CD8-positive, alpha-beta memory T cell (primary cell): ENCODE measurements at regions of chr1 and their contacts with region 1.

Region 1: DNA sequence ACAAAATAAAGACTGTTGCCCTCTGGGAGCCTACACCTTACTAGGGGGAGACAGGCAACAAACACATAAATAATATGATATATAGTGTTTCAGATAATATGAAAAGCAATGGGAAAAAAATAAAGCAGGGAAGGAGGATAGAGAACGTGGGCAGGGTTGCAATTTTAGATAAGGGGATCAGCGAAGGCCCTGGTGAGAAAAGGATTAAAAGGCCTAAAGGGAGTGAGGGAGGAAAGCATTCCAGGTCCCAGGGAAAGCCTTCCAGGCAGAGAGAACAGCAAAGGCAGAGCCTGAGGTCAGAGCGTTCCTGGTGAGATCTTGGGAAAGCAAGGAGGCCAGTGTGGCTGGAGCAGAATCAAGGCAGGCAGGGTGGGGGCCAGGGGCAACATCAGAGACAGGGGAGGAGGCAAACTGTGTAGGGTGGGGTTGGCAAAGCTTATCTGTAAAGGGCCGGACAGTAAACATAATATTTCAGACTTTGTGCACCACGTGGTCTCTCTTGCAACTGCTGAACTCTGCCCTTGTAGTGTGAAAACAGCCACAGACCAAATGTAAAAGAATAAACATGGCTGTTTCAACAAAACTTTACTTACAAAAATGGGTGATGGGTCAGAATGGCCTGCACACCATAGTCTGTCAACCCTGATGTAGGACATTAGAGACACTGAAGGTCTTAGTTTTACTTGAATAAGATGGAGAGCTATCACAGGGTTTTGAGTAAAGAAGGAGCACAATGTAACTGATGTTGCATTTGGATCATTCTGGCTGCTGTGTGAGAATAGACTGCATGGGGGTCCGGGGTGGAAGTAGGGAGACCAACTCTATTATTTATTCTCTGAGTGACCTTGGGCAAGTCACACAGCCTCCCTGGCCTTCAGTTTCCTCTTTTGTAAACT is 13.3 kb upstream of the CPT2 start:
- DNase-seq: no peak
- H3K4me3 ChIP-seq: no peak overlapping the region
- H3K4me3 Mint-ChIP-seq: no peak overlapping the region
- H3K27ac ChIP-seq: peak overlapping the region; percentile 43
- H3K27ac Mint-ChIP-seq: no peak overlapping the region
- H3K4me1 ChIP-seq: no peaks in the 10 kb centered on the region
- H3K4me1 Mint-ChIP-seq: peaks cover 0 to 2% (median 0%) of the 10 kb centered on the region in 3 donors
- H3K27me3 ChIP-seq: no peaks in the 10 kb centered on the region
- H3K27me3 Mint-ChIP-seq: peaks cover 0 to 16% of the 10 kb centered on the region in 2 donors

Region 2: DNA sequence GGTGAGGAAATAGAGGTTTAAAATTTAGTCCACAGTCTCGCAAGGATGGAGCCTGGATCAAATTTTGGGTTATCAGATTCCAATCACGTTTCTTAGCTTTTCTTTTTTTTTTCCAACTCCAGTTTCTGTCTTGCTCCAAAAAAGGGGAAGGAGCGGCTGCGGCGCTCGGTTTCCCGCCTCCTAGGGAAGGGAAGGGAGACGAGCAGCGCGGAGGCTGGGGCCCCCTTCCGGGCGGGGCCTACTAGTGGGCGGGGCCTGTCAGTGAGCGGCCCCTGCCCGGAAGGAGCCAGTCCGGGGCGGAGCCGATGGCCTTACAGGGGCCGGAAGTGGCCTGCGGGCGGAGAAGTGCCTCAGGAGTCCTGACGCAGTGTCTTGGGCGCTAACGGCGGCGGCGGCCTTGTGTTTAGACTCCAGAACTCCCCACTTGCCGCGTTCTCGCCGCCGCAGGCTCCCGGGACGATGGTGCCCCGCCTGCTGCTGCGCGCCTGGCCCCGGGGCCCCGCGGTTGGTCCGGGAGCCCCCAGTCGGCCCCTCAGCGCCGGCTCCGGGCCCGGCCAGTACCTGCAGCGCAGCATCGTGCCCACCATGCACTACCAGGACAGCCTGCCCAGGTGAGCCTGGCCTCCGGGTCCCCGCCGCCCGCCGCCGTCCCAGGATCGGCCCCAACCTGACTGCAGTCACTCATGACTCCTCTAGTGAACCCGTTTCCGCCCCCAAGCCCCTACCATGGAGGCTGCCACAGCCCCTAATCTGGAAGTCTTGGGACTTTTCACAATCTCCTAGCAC is 13.3 kb after region 1 on chr1 and contains the start of gene CPT2:
- CTCF ChIA-PET with region 1: interaction called, 18 read pairs
- POLR2A ChIA-PET with region 1: no interaction called
- DNase-seq: peak; percentile 88 to 95 (median 90)
- H3K4me3 ChIP-seq: peak within 1 kb of the TSS; percentile 83
- H3K4me3 Mint-ChIP-seq: peak within 1 kb of the TSS; percentile 92 to 99 (median 97)
- H3K27ac ChIP-seq: peak within 1 kb of the TSS; percentile 96
- H3K27ac Mint-ChIP-seq: peak within 1 kb of the TSS; percentile 98 to 100 (median 99)
- H3K4me1 ChIP-seq: peaks cover 21% of the 10 kb centered on the region
- H3K4me1 Mint-ChIP-seq: peaks cover 29 to 51% (median 38%) of the 10 kb centered on the region in 3 donors
- H3K27me3 ChIP-seq: no peaks in the 10 kb centered on the region
- H3K27me3 Mint-ChIP-seq: no peaks in the 10 kb centered on the region
- total RNA-seq, gene CPT2: 20.5 to 21.4 TPM